IMR-90 (cell line): ENCODE measurements at regions of chr1 and their contacts with region 1.

Region 1: GRCh38 chr1:214670098-214670497 is 67.1 kb downstream of the CENPF start:
- DNase-seq: peak; percentile 65
- ATAC-seq: peak; percentile 51
- H3K4me3 ChIP-seq: no peak overlapping the region
- H3K27ac ChIP-seq: no peak overlapping the region
- H3K4me1 ChIP-seq: no peaks in the 10 kb centered on the region
- H3K27me3 ChIP-seq: no peaks in the 10 kb centered on the region
- CTCF ChIP-seq: no peak
- POLR2A ChIP-seq: no peak
- RAD21 ChIP-seq: no peak

Region 2: DNA sequence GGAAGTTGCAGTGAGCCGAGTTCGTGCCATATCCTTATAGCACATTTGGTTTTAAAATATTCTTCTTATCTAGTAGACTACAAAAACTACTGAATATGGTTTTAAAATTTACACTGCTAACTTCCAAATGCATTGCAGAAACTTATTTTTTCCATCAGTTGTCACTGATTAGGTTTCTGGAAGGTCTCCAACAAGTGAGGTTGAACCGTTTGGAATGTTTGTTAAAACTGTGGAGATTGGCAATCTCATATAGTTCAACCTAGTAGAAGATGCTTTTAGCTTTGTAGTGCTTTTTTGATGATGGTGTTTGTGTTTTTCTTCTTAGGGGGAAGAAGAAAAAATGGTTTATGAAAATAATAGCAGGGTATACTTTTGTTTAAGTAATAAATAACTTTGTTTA is 54.2 kb before region 1 on chr1:
- CTCF ChIA-PET with region 1: no interaction called
- POLR2A ChIA-PET with region 1: no interaction called
- dilution Hi-C with region 1: no loop called
- in situ Hi-C with region 1: no loop called
- intact Hi-C with region 1: no loop called
- DNase-seq: peak; percentile 77
- ATAC-seq: peak; percentile 36
- H3K4me3 ChIP-seq: no peak overlapping the region
- H3K27ac ChIP-seq: peak overlapping the region; percentile 43; the same call in 1 of the 2 replicates
- H3K4me1 ChIP-seq: 0 out of 2 replicates have a peak, but pooled peaks cover 4% of the 10 kb centered on the region
- H3K27me3 ChIP-seq: no peaks in the 10 kb centered on the region
- CTCF ChIP-seq: no peak
- POLR2A ChIP-seq: no peak
- RAD21 ChIP-seq: no peak

Region 3: GRCh38 chr1:214707306-214708087 is 37.4 kb after region 1 on chr1:
- CTCF ChIA-PET with region 1: no interaction called
- POLR2A ChIA-PET with region 1: no interaction called
- dilution Hi-C with region 1: no loop called
- in situ Hi-C with region 1: no loop called
- intact Hi-C with region 1: loop called (anchors 1 kb)
- DNase-seq: peak; percentile 77
- ATAC-seq: peak; percentile 47
- H3K4me3 ChIP-seq: no peak overlapping the region
- H3K27ac ChIP-seq: peak overlapping the region; percentile 27; the same call in 1 of the 2 replicates
- H3K4me1 ChIP-seq: peaks cover 4% of the 10 kb centered on the region; the same call in 1 of the 2 replicates
- H3K27me3 ChIP-seq: no peaks in the 10 kb centered on the region
- CTCF ChIP-seq: no peak
- POLR2A ChIP-seq: no peak
- RAD21 ChIP-seq: no peak

Region 4: GRCh38 chr1:214747050-214747615 is 77.0 kb after region 1 on chr1:
- CTCF ChIA-PET with region 1: no interaction called
- POLR2A ChIA-PET with region 1: no interaction called
- dilution Hi-C with region 1: no loop called
- in situ Hi-C with region 1: no loop called
- intact Hi-C with region 1: no loop called
- DNase-seq: no peak
- ATAC-seq: no peak; the same call in 1 of the 2 replicates
- H3K4me3 ChIP-seq: no peak overlapping the region
- H3K27ac ChIP-seq: no peak overlapping the region
- H3K4me1 ChIP-seq: no peaks in the 10 kb centered on the region
- H3K27me3 ChIP-seq: no peaks in the 10 kb centered on the region
- CTCF ChIP-seq: no peak
- POLR2A ChIP-seq: no peak
- RAD21 ChIP-seq: no peak